B cell (primary cell): ENCODE measurements at regions of chr10 and their contacts with region 1.

Region 1: DNA sequence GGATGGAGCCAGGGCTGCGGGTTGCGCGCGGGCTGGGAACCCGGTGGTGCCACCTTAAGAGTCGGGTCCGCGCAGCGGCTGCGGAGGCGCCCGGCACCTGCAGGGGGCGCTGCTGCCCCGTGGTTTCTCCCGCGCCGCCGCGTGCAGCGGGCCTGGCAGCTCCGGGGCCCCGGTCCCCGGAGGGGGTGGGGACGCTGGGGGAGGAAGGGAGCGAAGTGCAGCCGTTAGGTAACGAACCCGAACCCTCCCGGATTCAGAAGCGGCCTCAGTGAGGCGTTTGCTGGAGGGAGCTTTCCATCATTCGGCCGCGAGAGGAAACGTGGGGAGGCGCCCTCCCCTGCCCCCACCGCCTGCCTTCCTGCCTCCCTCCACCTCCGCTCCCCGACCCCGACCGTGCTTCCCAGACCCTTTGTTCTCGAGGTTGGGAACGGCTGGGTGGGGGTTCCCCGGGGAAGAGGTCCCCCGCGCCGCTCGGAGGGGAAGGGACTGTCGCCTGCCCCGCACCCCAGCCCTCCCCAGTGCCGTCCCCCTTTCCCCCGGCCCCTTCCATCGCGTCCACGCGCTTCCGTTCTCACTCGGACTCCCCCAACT is 29.6 kb downstream of the SKIDA1 start:
- DNase-seq: peak; percentile 88
- ATAC-seq: peak; percentile 82
- H3K4me3 ChIP-seq: peak overlapping the region; percentile 44 to 74 (median 67)
- H3K4me3 Mint-ChIP-seq: peak overlapping the region; percentile 92
- H3K27ac ChIP-seq: no peak overlapping the region
- H3K27ac Mint-ChIP-seq: no peak overlapping the region
- H3K4me1 ChIP-seq: peaks cover 47 to 51% of the 10 kb centered on the region in 2 donors
- H3K4me1 Mint-ChIP-seq: peaks cover 39% of the 10 kb centered on the region
- H3K27me3 ChIP-seq: peaks cover 2 to 66% (median 55%) of the 10 kb centered on the region in 4 experiments
- H3K27me3 Mint-ChIP-seq: peaks cover 60% of the 10 kb centered on the region
- CTCF ChIP-seq: peak; percentile 96

Region 2: GRCh38 chr10:21399392-21400035 is 96.3 kb before region 1 on chr10:
- CTCF ChIA-PET with region 1: no interaction called
- POLR2A ChIA-PET with region 1: no interaction called
- intact Hi-C with region 1: no loop called
- DNase-seq: no peak
- ATAC-seq: no peak
- H3K4me3 ChIP-seq: no peak overlapping the region
- H3K4me3 Mint-ChIP-seq: no peak overlapping the region
- H3K27ac ChIP-seq: no peak overlapping the region
- H3K27ac Mint-ChIP-seq: no peak overlapping the region
- H3K4me1 ChIP-seq: no peaks in the 10 kb centered on the region
- H3K4me1 Mint-ChIP-seq: no peaks in the 10 kb centered on the region
- H3K27me3 ChIP-seq: no peaks in the 10 kb centered on the region
- H3K27me3 Mint-ChIP-seq: peaks cover 8% of the 10 kb centered on the region
- CTCF ChIP-seq: no peak

Region 3: DNA sequence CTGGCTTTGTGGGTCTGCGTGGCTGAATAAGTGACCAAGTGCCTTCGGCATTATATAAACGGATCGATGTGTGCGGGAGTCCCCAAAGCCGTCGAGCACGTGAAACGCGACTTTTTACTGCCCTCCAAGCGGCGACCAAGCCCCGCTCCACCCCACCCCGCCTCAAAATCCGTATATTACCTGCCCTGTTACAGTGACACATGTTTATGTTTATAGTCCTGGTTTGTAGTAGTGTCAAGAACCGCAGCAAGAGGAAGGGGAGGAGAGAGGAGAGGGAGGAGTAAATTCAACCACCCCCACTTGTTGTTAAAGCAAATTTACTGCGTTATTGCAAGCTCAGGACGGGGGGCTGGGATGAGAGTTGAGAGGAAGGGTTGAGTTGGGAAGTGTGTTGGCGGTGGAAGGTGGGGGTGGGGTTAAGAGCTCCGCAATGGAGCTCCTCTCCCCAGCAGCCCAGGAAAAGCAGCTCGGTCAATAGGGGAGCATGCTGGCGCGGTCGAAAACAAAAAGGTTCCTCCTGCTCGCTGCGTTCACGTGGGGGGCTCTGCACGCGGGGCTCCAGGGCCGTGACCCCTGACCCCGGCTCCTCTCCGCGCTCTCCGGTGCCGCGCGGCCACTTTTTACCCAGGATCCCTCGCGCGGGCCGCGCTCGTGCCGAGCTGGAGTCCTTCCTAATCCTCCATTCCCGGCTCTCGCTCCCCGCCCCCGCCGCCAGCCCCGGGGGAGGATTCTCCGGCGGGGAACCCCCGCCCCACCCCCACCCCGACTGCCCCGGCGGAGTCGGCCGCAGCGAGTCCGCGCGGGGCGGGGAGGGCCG is 29.7 kb after region 1 on chr10 and contains the start of gene SKIDA1:
- CTCF ChIA-PET with region 1: interaction called, 14 read pairs
- POLR2A ChIA-PET with region 1: interaction called, 7 read pairs
- intact Hi-C with region 1: loop called (anchors 2 kb)
- DNase-seq: peak; percentile 69
- ATAC-seq: peak; percentile 65
- H3K4me3 ChIP-seq: peak within 1 kb of the TSS; percentile 60 to 73 (median 64)
- H3K4me3 Mint-ChIP-seq: peak within 1 kb of the TSS; percentile 89
- H3K27ac ChIP-seq: peak within 1 kb of the TSS; percentile 31 to 52
- H3K27ac Mint-ChIP-seq: peak within 1 kb of the TSS; percentile 91
- H3K4me1 ChIP-seq: peaks cover 24 to 37% of the 10 kb centered on the region in 2 donors
- H3K4me1 Mint-ChIP-seq: peaks cover 25% of the 10 kb centered on the region
- H3K27me3 ChIP-seq: peaks cover 0 to 52% (median 46%) of the 10 kb centered on the region in 4 experiments
- H3K27me3 Mint-ChIP-seq: peaks cover 59% of the 10 kb centered on the region
- CTCF ChIP-seq: no peak
- total RNA-seq, gene SKIDA1: 0.10 TPM in 1 of 2 replicates, not detected in the other

Region 4: DNA sequence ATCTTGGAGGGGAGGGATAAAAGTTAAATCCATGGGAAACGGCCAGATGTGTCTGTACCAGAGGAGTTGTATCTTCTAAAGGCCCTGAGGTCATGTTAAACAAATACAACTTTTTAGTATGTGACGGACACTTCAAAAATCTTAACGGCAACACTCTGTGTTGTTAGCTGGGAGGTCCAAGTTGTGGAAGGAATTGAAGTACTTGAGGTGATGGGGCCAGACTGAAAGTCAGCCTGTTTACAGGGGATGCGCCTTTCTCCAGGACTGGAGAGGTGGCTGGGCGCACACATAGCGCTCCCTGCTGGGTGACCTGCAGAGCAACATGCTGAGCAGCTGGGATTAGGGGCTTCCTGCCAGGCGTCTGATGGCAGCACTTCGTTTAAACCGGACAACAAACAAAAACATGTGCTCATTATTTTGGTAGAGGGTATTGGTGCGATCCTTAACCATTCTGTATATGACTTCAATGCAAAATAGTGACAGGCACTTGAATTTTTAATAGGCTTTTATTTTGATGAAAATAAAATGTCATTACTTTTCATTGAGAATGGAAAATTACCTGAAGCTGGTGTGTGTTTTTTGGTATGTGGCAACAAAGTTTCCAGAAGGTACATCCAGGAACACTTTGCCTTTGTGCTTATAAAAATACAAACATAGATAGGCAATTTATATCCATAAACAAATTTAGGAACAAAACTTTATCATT is 236.4 kb after region 1 on chr10:
- CTCF ChIA-PET with region 1: interaction called, 7 read pairs
- POLR2A ChIA-PET with region 1: interaction called, 5 read pairs
- intact Hi-C with region 1: loop called (anchors 1 kb)
- DNase-seq: peak; percentile 53
- ATAC-seq: peak; percentile 31
- H3K4me3 ChIP-seq: no peak overlapping the region
- H3K4me3 Mint-ChIP-seq: no peak overlapping the region
- H3K27ac ChIP-seq: no peak overlapping the region
- H3K27ac Mint-ChIP-seq: no peak overlapping the region
- H3K4me1 ChIP-seq: no peaks in the 10 kb centered on the region
- H3K4me1 Mint-ChIP-seq: no peaks in the 10 kb centered on the region
- H3K27me3 ChIP-seq: no peaks in the 10 kb centered on the region
- H3K27me3 Mint-ChIP-seq: no peaks in the 10 kb centered on the region
- CTCF ChIP-seq: peak; percentile 67

Region 5: GRCh38 chr10:21989453-21990154 is 493.8 kb after region 1 on chr10:
- CTCF ChIA-PET with region 1: interaction called, 7 read pairs
- POLR2A ChIA-PET with region 1: no interaction called
- intact Hi-C with region 1: loop called (anchors 1 kb)
- DNase-seq: peak; percentile 47
- ATAC-seq: peak; percentile 76
- H3K4me3 ChIP-seq: no peak overlapping the region
- H3K4me3 Mint-ChIP-seq: no peak overlapping the region
- H3K27ac ChIP-seq: no peak overlapping the region
- H3K27ac Mint-ChIP-seq: no peak overlapping the region
- H3K4me1 ChIP-seq: no peaks in the 10 kb centered on the region
- H3K4me1 Mint-ChIP-seq: peaks cover 4% of the 10 kb centered on the region
- H3K27me3 ChIP-seq: no peaks in the 10 kb centered on the region
- H3K27me3 Mint-ChIP-seq: no peaks in the 10 kb centered on the region
- CTCF ChIP-seq: peak; percentile 46

Region 6: DNA sequence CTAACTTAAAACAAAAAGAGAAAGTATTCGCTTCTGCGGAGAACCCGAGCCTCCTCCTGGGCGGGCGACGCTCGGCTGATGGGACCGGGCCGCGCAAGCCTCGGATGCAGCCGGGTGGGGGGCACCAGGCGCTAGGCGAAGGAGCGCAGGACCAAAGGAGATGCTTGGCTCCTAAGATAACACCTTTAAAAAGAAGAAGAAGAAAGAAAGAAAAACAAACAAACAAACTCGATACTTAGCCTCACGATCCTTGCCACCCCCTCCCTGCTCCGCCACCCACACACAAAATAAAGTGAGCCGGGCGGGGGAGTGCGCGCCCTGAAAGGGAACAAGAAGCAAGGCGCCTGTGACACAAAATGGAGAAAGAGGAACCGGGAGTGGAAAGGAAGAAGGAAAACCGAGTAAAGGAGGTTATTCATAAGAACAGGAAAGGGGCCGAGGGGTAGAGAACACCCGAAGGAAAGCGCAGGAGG is 755.9 kb after region 1 on chr10:
- CTCF ChIA-PET with region 1: interaction called, 3 read pairs
- POLR2A ChIA-PET with region 1: no interaction called
- intact Hi-C with region 1: loop called (anchors 10 kb)
- DNase-seq: peak; percentile 90
- ATAC-seq: peak; percentile 56
- H3K4me3 ChIP-seq: peak overlapping the region; percentile 77 to 95 (median 86)
- H3K4me3 Mint-ChIP-seq: peak overlapping the region; percentile 97
- H3K27ac ChIP-seq: peak overlapping the region; percentile 95 to 97
- H3K27ac Mint-ChIP-seq: peak overlapping the region; percentile 100
- H3K4me1 ChIP-seq: peaks cover 9 to 15% of the 10 kb centered on the region in 2 donors
- H3K4me1 Mint-ChIP-seq: peaks cover 26% of the 10 kb centered on the region
- H3K27me3 ChIP-seq: no peaks in the 10 kb centered on the region
- H3K27me3 Mint-ChIP-seq: no peaks in the 10 kb centered on the region
- CTCF ChIP-seq: no peak